Activated CD4-positive, alpha-beta T cell treated with anti-CD3 and anti-CD28 coated beads for 36 hours (primary cell): ENCODE measurements at regions of chr14 and their contacts with region 1.

Region 1: GRCh38 chr14:106069804-106070625 is 543.6 kb downstream of the TMEM121 start:
- DNase-seq: peak; percentile 31
- ATAC-seq: peak; percentile 75
- H3K4me3 Mint-ChIP-seq: no peak overlapping the region
- H3K27ac Mint-ChIP-seq: peak overlapping the region; percentile 52
- H3K4me1 Mint-ChIP-seq: peaks cover 21% of the 10 kb centered on the region
- H3K27me3 Mint-ChIP-seq: peaks cover 17% of the 10 kb centered on the region

Region 2: GRCh38 chr14:105861985-105862465 is 208.0 kb before region 1 on chr14:
- CTCF ChIA-PET with region 1: no interaction called
- POLR2A ChIA-PET with region 1: no interaction called
- intact Hi-C with region 1: loop called in 1 of 2 experiments (anchors 5 kb)
- DNase-seq: peak; percentile 45
- ATAC-seq: peak; percentile 37
- H3K4me3 Mint-ChIP-seq: no peak overlapping the region
- H3K27ac Mint-ChIP-seq: peak overlapping the region; percentile 61
- H3K4me1 Mint-ChIP-seq: peaks cover 19% of the 10 kb centered on the region
- H3K27me3 Mint-ChIP-seq: peaks cover 13% of the 10 kb centered on the region

Region 3: DNA sequence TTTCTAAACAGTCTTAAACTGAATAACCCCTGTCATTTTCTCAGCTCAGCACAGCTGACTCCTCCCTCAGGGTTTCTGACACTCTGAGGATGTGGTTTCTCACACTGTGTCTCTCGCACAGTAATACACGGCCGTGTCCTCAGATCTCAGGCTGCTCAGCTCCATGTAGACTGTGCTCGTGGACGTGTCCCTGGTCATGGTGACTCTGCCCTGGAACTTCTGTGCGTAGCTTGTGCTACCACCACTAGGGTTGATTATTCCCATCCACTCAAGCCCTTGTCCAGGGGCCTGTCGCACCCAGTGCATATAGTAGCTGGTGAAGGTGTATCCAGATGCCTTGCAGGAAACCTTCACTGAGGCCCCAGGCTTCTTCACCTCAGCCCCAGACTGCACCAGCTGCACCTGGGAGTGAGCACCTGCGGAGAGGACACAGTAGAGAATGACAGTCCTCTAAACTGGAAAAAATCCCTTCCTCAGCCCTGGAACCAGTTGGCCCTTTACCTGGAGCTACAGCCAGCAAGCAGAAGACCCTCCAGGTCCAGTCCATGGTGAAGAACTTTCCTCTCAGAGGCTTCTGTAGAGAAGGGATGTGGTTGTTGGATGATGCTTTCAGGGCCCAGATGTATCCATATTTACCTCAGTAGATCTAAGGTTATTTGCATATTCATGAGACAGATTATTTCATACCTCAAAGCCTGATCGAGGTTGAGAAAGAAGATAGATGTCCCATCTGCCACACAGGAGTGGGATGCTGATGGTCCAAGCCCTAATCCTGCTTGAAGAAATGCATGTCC is 441.2 kb after region 1 on chr14:
- CTCF ChIA-PET with region 1: no interaction called
- POLR2A ChIA-PET with region 1: no interaction called
- intact Hi-C with region 1: loop called in 1 of 2 experiments (anchors 5 kb)
- DNase-seq: peak; percentile 69
- ATAC-seq: peak; percentile 53
- H3K4me3 Mint-ChIP-seq: peak overlapping the region; percentile 15
- H3K27ac Mint-ChIP-seq: peak overlapping the region; percentile 51
- H3K4me1 Mint-ChIP-seq: peaks cover 73% of the 10 kb centered on the region
- H3K27me3 Mint-ChIP-seq: no peaks in the 10 kb centered on the region